H1 (cell line): ENCODE measurements at regions of chr17 and their contacts with region 1.

Region 1: DNA sequence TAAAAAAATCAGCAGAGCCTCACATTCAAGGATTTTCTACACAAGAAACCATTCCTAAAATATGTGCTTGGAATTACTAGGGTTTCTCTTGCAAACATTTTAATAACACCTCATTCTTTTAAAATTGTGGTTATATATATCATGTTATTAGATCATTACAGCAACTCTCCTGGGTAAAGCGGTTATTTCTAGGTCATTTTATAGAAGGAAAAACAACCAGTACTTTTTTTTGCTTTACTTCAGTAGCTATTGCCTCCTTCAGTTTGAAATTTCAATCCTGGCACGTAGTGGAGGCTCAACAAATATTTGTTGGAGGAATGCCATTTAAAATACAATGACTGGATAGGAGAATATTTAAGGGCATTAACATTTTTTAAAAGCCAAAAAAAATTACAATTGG is 220.6 kb downstream of the CDRT15L2 start:
- DNase-seq: no peak
- H3K4me3 ChIP-seq: no peak overlapping the region
- H3K27ac ChIP-seq: no peak overlapping the region
- H3K4me1 ChIP-seq: no peaks in the 10 kb centered on the region
- H3K27me3 ChIP-seq: no peaks in the 10 kb centered on the region
- CTCF ChIP-seq: no peak
- EP300 ChIP-seq: no peak
- POLR2A ChIP-seq: no peak
- RAD21 ChIP-seq: no peak

Region 2: DNA sequence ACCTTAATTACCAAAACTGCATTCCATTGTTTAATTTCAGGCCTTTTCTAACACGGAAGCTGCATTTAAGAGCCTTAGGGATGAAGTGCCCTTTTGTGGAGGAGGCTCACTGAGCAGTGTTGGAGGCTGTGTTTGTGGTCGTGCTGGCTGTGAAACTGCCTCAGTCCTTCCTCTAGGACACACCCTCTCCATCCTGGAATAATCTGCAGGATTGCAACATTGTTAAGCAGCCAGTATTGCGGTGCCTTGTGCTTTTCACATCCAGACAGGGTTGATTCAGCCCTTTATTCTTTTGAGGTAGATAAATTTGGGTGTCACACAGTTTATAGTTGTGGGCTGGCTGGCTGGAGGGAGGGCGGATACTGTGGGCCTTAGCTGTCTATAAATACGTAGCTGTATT is 79.0 kb before region 1 on chr17:
- CTCF ChIA-PET with region 1: no interaction called
- POLR2A ChIA-PET with region 1: no interaction called
- DNase-seq: no peak
- H3K4me3 ChIP-seq: no peak overlapping the region
- H3K27ac ChIP-seq: no peak overlapping the region
- H3K4me1 ChIP-seq: no peaks in the 10 kb centered on the region
- H3K27me3 ChIP-seq: no peaks in the 10 kb centered on the region
- CTCF ChIP-seq: no peak
- EP300 ChIP-seq: no peak
- POLR2A ChIP-seq: no peak
- RAD21 ChIP-seq: no peak

Region 3: DNA sequence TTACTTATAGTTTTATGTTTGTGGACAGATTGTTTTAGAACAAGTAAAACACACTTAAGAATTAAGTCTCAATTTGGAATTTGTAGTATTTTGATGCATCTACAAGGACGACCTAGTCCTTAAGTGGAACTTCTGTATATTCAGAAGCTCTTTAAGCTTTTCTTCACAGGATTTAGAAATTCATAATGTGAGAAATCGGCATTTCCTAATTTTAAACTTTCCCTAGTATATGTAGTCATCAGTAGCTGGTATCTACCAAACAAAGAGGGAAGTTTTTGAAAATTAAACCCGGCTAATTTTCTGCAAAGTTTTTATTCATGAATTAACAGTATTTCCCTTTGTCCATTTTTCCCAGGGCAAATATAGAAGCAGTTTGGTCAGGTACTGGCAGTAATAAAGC is 17.1 kb before region 1 on chr17:
- CTCF ChIA-PET with region 1: interaction called, 13 read pairs
- POLR2A ChIA-PET with region 1: interaction called, 3 read pairs
- DNase-seq: no peak
- H3K4me3 ChIP-seq: no peak overlapping the region
- H3K27ac ChIP-seq: no peak overlapping the region
- H3K4me1 ChIP-seq: no peaks in the 10 kb centered on the region
- H3K27me3 ChIP-seq: no peaks in the 10 kb centered on the region
- CTCF ChIP-seq: no peak
- EP300 ChIP-seq: no peak
- POLR2A ChIP-seq: no peak
- RAD21 ChIP-seq: no peak

Region 4: GRCh38 chr17:20852239-20852989 is 52.3 kb after region 1 on chr17:
- CTCF ChIA-PET with region 1: interaction called, 10 read pairs
- POLR2A ChIA-PET with region 1: interaction called, 3 read pairs
- DNase-seq: peak in 1 of 2 experiments; percentile 73
- H3K4me3 ChIP-seq: peak overlapping the region; percentile 51 to 67 (median 61); a peak in 7 of 8 replicates
- H3K27ac ChIP-seq: no peak overlapping the region
- H3K4me1 ChIP-seq: peaks cover 0 to 2% (median 0%) of the 10 kb centered on the region in 4 experiments; a peak in 2 of 7 replicates
- H3K27me3 ChIP-seq: peaks cover 0 to 17% (median 5%) of the 10 kb centered on the region in 4 experiments; a peak in 4 of 7 replicates
- CTCF ChIP-seq: peak in 1 of 3 experiments; percentile 2; a peak in 1 of 4 replicates
- EP300 ChIP-seq: no peak
- POLR2A ChIP-seq: no peak
- RAD21 ChIP-seq: no peak

Region 5: GRCh38 chr17:20896153-20896649 is 96.1 kb after region 1 on chr17:
- CTCF ChIA-PET with region 1: no interaction called
- POLR2A ChIA-PET with region 1: no interaction called
- DNase-seq: no peak
- H3K4me3 ChIP-seq: no peak overlapping the region
- H3K27ac ChIP-seq: no peak overlapping the region
- H3K4me1 ChIP-seq: peaks cover 0 to 11% (median 0%) of the 10 kb centered on the region in 4 experiments; a peak in 1 of 7 replicates
- H3K27me3 ChIP-seq: no peaks in the 10 kb centered on the region
- CTCF ChIP-seq: peak; percentile 6 to 22 (median 20); a peak in 2 of 4 replicates
- EP300 ChIP-seq: no peak
- POLR2A ChIP-seq: no peak
- RAD21 ChIP-seq: peak in 1 of 2 experiments; percentile 22; a peak in 2 of 4 replicates

Region 6: DNA sequence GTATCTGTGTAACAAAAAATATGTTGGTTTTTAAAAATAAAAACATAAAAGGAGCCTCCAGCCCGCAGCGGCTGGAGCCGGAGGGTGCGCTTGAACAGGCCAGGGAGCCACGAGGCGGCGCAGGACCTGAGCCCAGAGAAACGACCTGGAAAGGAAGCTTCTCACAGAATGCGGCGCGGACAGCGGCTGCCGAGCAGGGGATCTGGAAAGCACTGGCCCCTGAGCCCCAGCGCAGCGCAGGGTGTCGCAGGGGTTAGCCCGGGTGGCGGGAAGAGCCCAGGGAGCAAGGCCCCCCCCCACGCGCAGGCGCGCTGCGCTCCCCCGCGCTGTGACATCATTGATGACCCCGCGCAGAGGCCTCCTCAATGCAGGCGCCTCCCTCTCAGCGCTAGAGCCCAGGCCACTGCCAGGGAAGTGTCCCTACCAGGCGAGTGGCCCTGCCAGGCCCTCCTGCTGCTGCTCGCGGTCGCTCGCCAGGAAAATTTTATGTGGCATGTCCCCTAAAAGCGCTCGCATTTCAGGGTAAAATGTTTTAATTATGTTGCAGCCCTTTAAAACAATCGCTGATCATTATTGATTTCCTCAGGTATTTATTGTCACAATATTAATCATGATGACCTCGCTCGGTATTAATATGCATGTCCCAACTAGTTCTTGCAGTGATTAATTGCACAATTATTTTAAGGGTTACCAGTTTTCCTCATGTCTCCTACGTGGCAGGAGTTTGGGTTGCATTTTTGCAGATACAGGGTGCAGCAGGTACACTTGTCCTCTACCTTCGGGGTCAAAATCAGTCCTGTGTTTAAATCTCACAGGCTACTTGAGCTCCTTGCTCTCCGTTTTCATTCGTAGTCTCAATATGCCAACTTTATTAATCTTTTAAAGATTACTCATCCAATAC is 108.5 kb after region 1 on chr17:
- CTCF ChIA-PET with region 1: no interaction called
- POLR2A ChIA-PET with region 1: no interaction called
- DNase-seq: peak; percentile 82 to 86
- H3K4me3 ChIP-seq: peak overlapping the region; percentile 7 to 54 (median 30); a peak in 6 of 8 replicates
- H3K27ac ChIP-seq: 0 out of 2 replicates have a peak overlapping the region, but pooled peaks have one; percentile 17
- H3K4me1 ChIP-seq: peaks cover 0 to 3% (median 0%) of the 10 kb centered on the region in 4 experiments; a peak in 3 of 7 replicates
- H3K27me3 ChIP-seq: no peaks in the 10 kb centered on the region
- CTCF ChIP-seq: peak; percentile 35 to 53 (median 50); a peak in 3 of 4 replicates
- EP300 ChIP-seq: peak in 1 of 2 experiments; percentile 93; a peak in 1 of 3 replicates
- POLR2A ChIP-seq: peak in 1 of 2 experiments; percentile 73; a peak in 2 of 3 replicates
- RAD21 ChIP-seq: peak; percentile 42 to 53; a peak in 3 of 4 replicates